ENCODE measurements at regions of chr17 and their contacts with region 1.

Region 1: GRCh38 chr17:62671583-62672312 is 44.3 kb downstream of the MRC2 start:
- DNase-seq: no peak
- ATAC-seq: peak; percentile 20 to 35; a peak in 4 of 6 replicates
- H3K4me3 ChIP-seq: no peak overlapping the region
- H3K27ac ChIP-seq: no peak overlapping the region
- H3K4me1 ChIP-seq: peaks cover 6% of the 10 kb centered on the region; the same call in 1 of the 3 replicates
- CTCF ChIP-seq: no peak
- EP300 ChIP-seq: no peak
- POLR2A ChIP-seq: no peak
- RAD21 ChIP-seq: no peak

Region 2: DNA sequence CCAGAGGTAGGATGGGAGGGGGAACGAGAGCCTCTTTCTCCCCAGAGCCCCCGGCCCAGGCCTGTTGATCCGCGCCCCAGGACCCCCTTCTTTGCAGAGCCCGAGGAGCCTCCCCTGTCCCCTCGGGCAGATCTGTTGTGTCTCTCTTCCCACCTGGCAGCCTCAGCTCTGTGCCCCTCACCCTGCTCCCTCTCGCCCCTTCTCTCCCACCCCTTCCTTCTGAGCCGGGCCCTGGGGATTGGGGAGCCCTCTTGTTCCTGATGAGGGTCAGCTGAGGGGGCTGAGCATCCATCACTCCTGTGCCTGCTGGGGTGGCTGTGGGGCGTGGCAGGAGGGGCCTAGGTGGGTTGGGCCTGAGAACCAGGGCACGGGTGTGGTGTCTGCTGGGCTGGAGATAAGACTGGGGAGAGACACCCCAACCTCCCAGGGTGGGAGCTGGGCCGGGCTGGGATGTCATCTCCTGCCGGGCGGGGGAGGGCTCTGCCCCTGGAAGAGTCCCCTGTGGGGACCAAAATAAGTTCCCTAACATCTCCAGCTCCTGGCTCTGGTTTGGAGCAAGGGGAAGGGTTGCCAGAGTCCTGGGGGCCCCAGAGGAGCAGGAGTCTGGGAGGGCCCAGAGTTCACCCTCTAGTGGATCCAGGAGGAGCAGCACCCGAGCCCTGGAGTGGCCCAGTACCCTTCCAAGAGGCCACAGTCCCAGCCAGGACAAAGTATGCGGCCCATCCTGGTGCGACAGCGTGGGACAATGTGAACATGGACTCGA is 21.2 kb after region 1 on chr17:
- CTCF ChIA-PET with region 1: interaction called, 178 read pairs
- POLR2A ChIA-PET with region 1: no interaction called
- DNase-seq: peak; percentile 51 to 58
- ATAC-seq: peak; percentile 72 to 87; a peak in 5 of 6 replicates
- H3K4me3 ChIP-seq: no peak overlapping the region
- H3K27ac ChIP-seq: no peak overlapping the region
- H3K4me1 ChIP-seq: peaks cover 3% of the 10 kb centered on the region; the same call in 1 of the 3 replicates
- CTCF ChIP-seq: peak; percentile 47
- EP300 ChIP-seq: no peak
- POLR2A ChIP-seq: no peak
- RAD21 ChIP-seq: peak in 1 of 2 experiments; percentile 39; a peak in 3 of 5 replicates

Region 3: DNA sequence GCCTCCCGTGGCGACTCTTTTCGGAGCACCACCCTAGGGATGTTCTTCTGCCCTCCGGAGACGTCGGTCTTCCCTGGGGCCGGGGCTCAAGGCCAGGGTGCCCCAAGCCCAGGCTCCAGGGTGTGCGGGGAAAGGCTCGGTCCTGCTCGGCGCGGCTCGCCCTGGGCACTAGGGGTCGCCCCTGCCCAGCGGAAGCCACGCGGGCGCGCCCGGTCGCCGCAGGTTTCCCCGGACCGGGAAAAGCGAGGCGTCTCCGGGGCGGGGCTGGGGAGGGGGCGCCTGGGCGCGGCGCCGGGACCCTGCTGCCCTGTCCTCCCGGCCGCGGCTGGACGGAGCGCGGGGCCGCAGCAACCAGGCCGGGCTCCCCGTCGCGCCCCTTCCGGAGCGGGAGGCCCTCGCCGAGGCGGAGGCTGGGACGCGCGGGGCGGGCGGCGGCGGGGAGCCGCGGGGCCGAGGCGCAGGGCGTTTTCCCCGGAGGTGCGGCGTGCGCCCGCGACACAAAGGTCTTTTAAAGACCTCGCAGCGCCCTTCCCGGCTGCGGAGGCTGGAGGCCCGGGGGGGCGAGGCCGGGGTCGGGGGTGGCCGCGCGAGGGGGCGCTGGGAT is 32.1 kb after region 1 on chr17:
- CTCF ChIA-PET with region 1: interaction called, 10 read pairs
- POLR2A ChIA-PET with region 1: no interaction called
- DNase-seq: peak; percentile 64 to 74
- ATAC-seq: peak; percentile 86 to 93
- H3K4me3 ChIP-seq: peak overlapping the region; percentile 70
- H3K27ac ChIP-seq: peak overlapping the region; percentile 96 to 97
- H3K4me1 ChIP-seq: peaks cover 21% of the 10 kb centered on the region
- CTCF ChIP-seq: peak; percentile 99
- EP300 ChIP-seq: no peak; a peak in 1 of 5 replicates
- POLR2A ChIP-seq: no peak
- RAD21 ChIP-seq: peak; percentile 94 to 100

Region 4: DNA sequence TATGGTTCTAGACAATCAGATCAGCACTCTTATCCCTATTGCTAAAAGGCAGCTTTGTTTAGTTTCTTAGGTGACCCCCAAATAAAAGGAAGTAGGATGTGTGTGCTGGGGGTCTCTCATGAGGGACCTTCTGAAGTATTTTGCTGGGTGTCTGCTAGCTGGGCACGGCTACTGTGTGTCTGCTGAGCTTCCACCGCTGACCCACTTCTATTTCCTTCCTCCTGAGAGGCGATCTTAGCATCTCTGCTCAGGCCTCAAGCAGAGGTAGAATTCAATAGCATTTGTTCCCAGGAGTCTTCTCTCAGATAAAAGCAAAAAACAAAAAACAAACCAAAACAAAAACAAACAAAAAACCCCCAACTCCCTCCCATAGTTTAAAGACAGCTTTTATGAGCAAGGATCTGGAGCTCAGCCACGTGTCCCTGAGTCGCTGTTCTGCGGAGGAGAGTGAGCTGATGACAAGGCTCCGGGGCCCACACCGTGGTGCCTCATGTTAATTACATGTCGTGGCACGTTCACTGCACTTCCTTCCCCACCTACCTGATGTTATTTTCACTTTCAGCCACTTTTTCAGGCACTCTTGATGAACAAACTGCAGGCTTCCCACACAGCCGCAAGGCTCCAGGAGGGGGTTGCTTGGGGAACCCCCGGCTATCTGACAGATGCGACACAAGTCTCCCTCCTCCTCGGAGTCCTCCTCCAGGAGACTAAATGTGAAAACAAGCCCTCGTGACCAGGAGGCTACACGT is 52.8 kb after region 1 on chr17:
- CTCF ChIA-PET with region 1: interaction called, 10 read pairs
- POLR2A ChIA-PET with region 1: no interaction called
- DNase-seq: no peak
- ATAC-seq: no peak
- H3K4me3 ChIP-seq: no peak overlapping the region
- H3K27ac ChIP-seq: peak overlapping the region in 1 of 2 experiments; percentile 8; a peak in 1 of 6 replicates
- H3K4me1 ChIP-seq: peaks cover 13% of the 10 kb centered on the region; the same call in 1 of the 3 replicates
- CTCF ChIP-seq: no peak
- EP300 ChIP-seq: no peak
- POLR2A ChIP-seq: no peak
- RAD21 ChIP-seq: no peak

Region 5: GRCh38 chr17:62809656-62810055 is 137.9 kb after region 1 on chr17:
- CTCF ChIA-PET with region 1: no interaction called
- POLR2A ChIA-PET with region 1: no interaction called
- DNase-seq: no peak
- ATAC-seq: no peak
- H3K4me3 ChIP-seq: no peak overlapping the region
- H3K27ac ChIP-seq: peak overlapping the region; percentile 18 to 42; a peak in 3 of 6 replicates
- H3K4me1 ChIP-seq: peaks cover 27% of the 10 kb centered on the region
- CTCF ChIP-seq: no peak
- EP300 ChIP-seq: no peak
- POLR2A ChIP-seq: no peak
- RAD21 ChIP-seq: no peak

Region 6: DNA sequence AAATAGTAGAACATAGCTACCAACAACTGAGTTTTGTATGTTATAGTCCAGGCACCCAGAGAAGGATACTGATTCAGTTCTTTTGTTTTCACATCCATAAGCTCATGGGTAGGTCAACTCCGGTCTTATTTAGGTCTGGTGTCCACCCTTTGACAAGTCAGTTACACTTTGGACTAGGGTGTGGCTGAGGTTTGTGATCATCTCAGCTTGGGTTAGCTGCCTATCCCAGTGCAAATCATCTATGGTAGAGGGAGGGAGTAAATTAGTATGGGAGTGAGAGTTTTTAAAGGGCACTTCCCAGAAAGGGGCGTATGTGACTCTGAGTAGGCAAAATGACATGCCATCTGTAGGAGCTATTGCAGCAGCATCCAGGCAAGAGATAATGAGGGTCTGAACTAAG is 360.4 kb after region 1 on chr17:
- CTCF ChIA-PET with region 1: interaction called, 17 read pairs
- POLR2A ChIA-PET with region 1: no interaction called
- DNase-seq: peak in 1 of 2 experiments; percentile 34
- ATAC-seq: peak in 1 of 2 experiments; percentile 50; a peak in 3 of 6 replicates
- H3K4me3 ChIP-seq: no peak overlapping the region
- H3K27ac ChIP-seq: no peak overlapping the region
- H3K4me1 ChIP-seq: peaks cover 52% of the 10 kb centered on the region
- CTCF ChIP-seq: no peak
- EP300 ChIP-seq: no peak
- POLR2A ChIP-seq: no peak
- RAD21 ChIP-seq: no peak

Region 7: DNA sequence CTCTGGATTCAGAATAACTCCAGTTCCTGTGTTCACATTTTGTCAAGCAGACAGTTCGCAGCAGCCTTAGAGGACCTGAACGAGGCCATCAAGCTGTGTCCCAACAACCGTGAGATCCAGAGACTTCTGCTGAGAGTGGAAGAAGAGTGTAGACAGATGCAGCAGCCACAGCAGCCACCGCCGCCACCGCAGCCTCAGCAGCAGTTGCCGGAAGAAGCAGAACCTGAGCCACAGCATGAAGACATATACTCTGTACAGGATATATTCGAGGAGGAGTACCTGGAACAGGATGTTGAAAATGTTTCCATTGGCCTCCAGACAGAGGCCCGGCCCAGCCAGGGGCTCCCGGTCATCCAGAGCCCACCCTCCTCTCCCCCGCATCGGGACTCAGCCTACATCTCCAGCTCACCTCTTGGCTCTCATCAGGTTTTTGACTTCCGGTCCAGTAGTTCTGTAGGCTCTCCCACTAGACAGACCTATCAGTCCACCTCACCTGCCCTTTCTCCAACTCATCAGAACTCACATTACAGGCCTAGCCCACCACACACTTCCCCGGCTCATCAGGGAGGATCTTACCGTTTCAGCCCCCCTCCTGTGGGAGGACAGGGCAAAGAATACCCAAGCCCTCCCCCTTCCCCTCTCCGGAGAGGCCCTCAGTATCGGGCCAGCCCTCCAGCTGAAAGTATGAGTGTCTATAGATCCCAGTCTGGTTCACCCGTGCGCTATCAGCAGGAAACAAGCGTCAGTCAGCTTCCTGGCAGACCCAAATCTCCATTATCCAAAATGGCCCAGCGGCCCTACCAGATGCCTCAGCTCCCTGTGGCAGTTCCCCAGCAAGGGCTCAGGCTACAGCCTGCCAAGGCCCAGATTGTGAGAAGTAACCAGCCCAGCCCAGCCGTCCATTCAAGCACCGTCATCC is 748.5 kb after region 1 on chr17:
- CTCF ChIA-PET with region 1: interaction called, 13 read pairs
- POLR2A ChIA-PET with region 1: no interaction called
- DNase-seq: no peak
- ATAC-seq: no peak
- H3K4me3 ChIP-seq: no peak overlapping the region
- H3K27ac ChIP-seq: no peak overlapping the region
- H3K4me1 ChIP-seq: no peaks in the 10 kb centered on the region
- CTCF ChIP-seq: no peak
- EP300 ChIP-seq: no peak
- POLR2A ChIP-seq: no peak
- RAD21 ChIP-seq: no peak